ENCODE measurements at regions of chr7 and their contacts with region 1.

Region 1: GRCh38 chr7:1693991-1694524 is 24.0 kb downstream of the ELFN1 start:
- DNase-seq: no peak
- ATAC-seq: no peak; the same call in 1 of the 3 replicates
- H3K4me3 ChIP-seq: no peak overlapping the region
- H3K27ac ChIP-seq: no peak overlapping the region
- H3K4me1 ChIP-seq: no peaks in the 10 kb centered on the region
- H3K27me3 ChIP-seq: peaks cover 3 to 20% of the 10 kb centered on the region in 2 experiments; a peak in 2 of 5 replicates
- CTCF ChIP-seq: no peak
- EP300 ChIP-seq: no peak
- POLR2A ChIP-seq: no peak
- RAD21 ChIP-seq: no peak

Region 2: GRCh38 chr7:1555809-1556540 is 138.1 kb before region 1 on chr7 and contains the start of gene TMEM184A:
- CTCF ChIA-PET with region 1: no interaction called
- POLR2A ChIA-PET with region 1: no interaction called
- in situ Hi-C with region 1: no loop called
- intact Hi-C with region 1: no loop called
- DNase-seq: peak; percentile 89
- ATAC-seq: peak; percentile 76
- H3K4me3 ChIP-seq: peak within 1 kb of the TSS; percentile 35 to 72 (median 55); a peak in 5 of 6 replicates
- H3K27ac ChIP-seq: peak within 1 kb of the TSS; percentile 89
- H3K4me1 ChIP-seq: peaks cover 54% of the 10 kb centered on the region
- H3K27me3 ChIP-seq: peaks cover 3 to 7% of the 10 kb centered on the region in 2 experiments; a peak in 2 of 5 replicates
- CTCF ChIP-seq: peak; percentile 97
- EP300 ChIP-seq: 0 out of 4 replicates have a peak, but pooled peaks of 1 of the 2 experiments have one; percentile 14
- POLR2A ChIP-seq: peak in 1 of 2 experiments; percentile 57; a peak in 2 of 4 replicates
- RAD21 ChIP-seq: peak; percentile 92
- total RNA-seq, gene TMEM184A: 3.1 and 9.5 TPM in 2 replicates

Region 3: DNA sequence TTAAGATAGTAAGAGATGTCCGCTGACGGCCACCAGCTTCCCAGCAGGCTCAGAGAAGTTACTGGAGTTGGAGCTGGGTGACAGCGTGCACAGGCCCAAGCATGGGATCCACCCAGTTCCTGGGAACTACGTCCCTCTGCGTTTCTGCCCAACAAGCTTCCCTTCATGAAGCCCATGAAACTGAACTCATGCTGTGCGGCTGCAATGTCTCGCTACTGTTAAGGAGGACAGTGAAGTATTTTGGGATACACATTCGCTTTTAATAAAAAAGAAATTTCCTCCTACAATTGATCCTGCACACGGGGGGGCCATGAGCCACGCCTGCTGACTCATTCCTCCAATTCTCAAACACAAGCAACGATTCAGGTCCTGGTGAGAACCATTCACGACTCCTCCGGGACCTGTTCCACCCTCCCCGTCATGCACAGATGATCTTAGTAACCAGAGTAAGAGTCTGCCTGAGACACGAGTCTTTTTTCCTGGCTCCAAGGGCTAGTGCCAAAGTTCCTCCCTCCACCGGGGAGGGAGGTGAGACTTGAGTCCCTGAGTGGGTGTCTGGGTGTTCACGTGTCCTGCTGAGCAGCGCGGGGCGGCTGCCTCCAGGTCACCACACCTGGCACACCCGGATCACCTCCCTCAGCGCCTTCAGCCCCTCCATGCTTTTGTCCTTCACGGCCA is 126.8 kb before region 1 on chr7:
- CTCF ChIA-PET with region 1: no interaction called
- POLR2A ChIA-PET with region 1: no interaction called
- in situ Hi-C with region 1: no loop called
- intact Hi-C with region 1: no loop called
- DNase-seq: no peak
- ATAC-seq: no peak
- H3K4me3 ChIP-seq: no peak overlapping the region
- H3K27ac ChIP-seq: no peak overlapping the region
- H3K4me1 ChIP-seq: peaks cover 42% of the 10 kb centered on the region
- H3K27me3 ChIP-seq: peaks cover 1 to 2% of the 10 kb centered on the region in 2 experiments; a peak in 2 of 5 replicates
- CTCF ChIP-seq: no peak
- EP300 ChIP-seq: no peak
- POLR2A ChIP-seq: no peak
- RAD21 ChIP-seq: no peak

Region 4: DNA sequence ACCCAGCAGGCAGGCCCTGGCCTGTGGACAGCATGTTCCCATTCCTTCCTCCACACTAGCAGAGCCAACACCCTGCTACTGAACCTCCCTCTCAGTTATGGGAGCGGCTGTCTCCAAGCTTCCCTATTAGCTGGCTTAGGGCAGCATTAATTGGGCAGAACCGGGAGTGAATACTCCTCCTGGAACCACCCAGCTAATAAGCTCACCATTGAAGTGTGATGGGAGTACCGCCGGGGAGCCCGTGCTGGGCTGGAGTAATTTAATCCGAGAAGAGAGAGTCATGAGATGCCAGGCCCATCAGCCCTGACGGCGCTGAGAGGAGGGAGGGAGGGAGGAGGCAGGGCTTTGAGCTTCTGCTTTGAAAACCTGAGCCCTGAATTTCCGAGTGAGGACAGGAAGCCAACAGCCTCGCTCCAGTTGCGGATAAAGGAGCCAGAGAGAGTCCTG is 55.8 kb before region 1 on chr7:
- CTCF ChIA-PET with region 1: no interaction called
- POLR2A ChIA-PET with region 1: no interaction called
- in situ Hi-C with region 1: loop called (anchors 10 kb)
- intact Hi-C with region 1: no loop called
- DNase-seq: no peak
- ATAC-seq: no peak
- H3K4me3 ChIP-seq: no peak overlapping the region
- H3K27ac ChIP-seq: no peak overlapping the region
- H3K4me1 ChIP-seq: no peaks in the 10 kb centered on the region
- H3K27me3 ChIP-seq: peaks cover 4 to 20% of the 10 kb centered on the region in 2 experiments; a peak in 4 of 5 replicates
- CTCF ChIP-seq: no peak
- EP300 ChIP-seq: no peak
- POLR2A ChIP-seq: no peak
- RAD21 ChIP-seq: no peak

Region 5: DNA sequence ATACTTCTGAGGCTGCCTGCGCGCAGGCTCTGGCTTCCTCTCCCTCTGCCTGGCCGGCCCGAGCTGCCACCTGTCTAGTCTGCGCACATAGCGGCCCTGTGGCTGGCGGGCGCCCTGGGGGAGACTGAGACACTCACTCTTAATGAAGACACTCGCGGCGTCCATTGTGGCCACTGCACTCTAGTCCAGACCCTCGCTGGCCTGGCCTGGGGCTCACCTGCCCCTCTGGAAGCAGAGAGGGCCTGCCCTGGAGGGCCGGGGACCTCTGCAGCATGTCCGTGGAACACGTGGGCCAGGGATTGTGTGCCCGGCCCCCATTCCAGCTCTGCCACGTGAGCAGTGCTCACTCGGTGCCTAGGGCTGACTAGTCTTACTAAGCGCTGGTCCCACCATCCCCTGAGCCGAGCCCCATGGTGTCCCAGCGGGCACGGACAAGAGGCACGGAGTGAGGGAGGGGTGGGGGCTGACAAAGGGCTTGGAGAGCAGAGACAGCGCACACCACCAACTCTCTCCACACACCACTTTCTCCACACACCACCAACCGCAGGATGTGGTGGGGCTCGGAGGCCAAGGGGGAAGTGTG is 125.3 kb after region 1 on chr7:
- CTCF ChIA-PET with region 1: no interaction called
- POLR2A ChIA-PET with region 1: no interaction called
- in situ Hi-C with region 1: no loop called
- intact Hi-C with region 1: no loop called
- DNase-seq: no peak
- ATAC-seq: no peak
- H3K4me3 ChIP-seq: no peak overlapping the region
- H3K27ac ChIP-seq: no peak overlapping the region
- H3K4me1 ChIP-seq: peaks cover 28% of the 10 kb centered on the region
- H3K27me3 ChIP-seq: no peaks in the 10 kb centered on the region
- CTCF ChIP-seq: no peak
- EP300 ChIP-seq: no peak
- POLR2A ChIP-seq: no peak
- RAD21 ChIP-seq: no peak